Panc1 (cell line): ENCODE measurements at regions of chr1 and their contacts with region 1.

Region 1: DNA sequence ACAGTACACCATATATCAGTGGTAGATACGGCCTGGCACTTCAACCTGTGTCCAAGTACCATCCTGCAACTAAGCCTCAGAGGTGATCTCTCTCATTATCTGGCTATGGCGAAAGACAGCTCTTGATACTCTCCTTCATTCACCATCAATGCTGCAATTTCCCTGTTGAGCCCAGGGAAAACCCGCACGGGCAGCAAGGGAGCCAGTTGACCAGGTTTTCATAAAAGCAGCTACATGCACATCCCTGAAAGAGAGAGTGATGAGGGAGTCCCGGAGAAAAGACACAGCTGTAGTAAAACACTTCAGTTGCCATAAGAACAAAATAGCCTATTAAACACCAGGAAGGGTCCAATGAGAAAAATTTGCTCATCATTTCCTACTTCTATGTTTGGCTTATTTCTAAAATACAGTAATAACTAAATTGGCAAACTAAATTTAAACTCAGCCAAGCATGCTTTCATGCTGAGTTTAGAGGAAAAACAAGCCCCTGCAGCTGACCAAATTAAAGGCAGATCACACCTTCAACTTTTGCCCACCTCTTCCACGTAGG is 68.3 kb downstream of the CAPZB start:
- DNase-seq: no peak
- ATAC-seq: no peak
- H3K4me3 ChIP-seq: no peak overlapping the region
- H3K27ac ChIP-seq: no peak overlapping the region
- H3K4me1 ChIP-seq: peaks cover 43% of the 10 kb centered on the region
- H3K27me3 ChIP-seq: no peaks in the 10 kb centered on the region
- CTCF ChIP-seq: no peak

Region 2: DNA sequence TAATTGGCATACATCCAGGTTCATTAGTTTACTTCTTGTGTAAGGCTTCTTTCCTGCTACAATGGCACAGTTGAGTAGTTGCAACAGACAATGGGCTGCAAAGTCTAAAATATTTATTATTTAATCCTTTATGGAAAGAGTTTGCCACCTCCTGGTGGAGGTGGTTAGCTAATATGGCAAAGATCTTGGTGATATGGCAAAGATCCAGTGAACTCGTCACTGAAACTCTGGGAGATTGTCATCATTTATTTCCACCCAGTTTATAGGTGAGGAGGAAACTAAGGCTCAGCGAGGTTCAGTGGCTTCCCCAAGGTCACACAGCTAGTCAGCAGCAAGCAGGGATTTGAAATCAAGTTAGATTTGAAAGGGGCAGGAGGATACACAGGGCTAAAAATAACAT is 444.5 kb before region 1 on chr1:
- CTCF ChIA-PET with region 1: no interaction called
- POLR2A ChIA-PET with region 1: no interaction called
- in situ Hi-C with region 1: no loop called
- intact Hi-C with region 1: no loop called
- DNase-seq: no peak
- ATAC-seq: 0 out of 2 replicates have a peak, but pooled peaks have one; percentile 10
- H3K4me3 ChIP-seq: no peak overlapping the region
- H3K27ac ChIP-seq: no peak overlapping the region
- H3K4me1 ChIP-seq: peaks cover 13% of the 10 kb centered on the region; the same call in 1 of the 2 replicates
- H3K27me3 ChIP-seq: no peaks in the 10 kb centered on the region
- CTCF ChIP-seq: no peak; the same call in 1 of the 2 replicates

Region 3: GRCh38 chr1:19406680-19407079 is 10.3 kb before region 1 on chr1:
- CTCF ChIA-PET with region 1: no interaction called
- POLR2A ChIA-PET with region 1: interaction called, 10 read pairs
- in situ Hi-C with region 1: no loop called
- intact Hi-C with region 1: no loop called
- DNase-seq: no peak
- ATAC-seq: no peak
- H3K4me3 ChIP-seq: no peak overlapping the region
- H3K27ac ChIP-seq: no peak overlapping the region
- H3K4me1 ChIP-seq: peaks cover 14% of the 10 kb centered on the region
- H3K27me3 ChIP-seq: no peaks in the 10 kb centered on the region
- CTCF ChIP-seq: no peak

Region 4: GRCh38 chr1:19454265-19455146 is 37.5 kb after region 1 on chr1:
- CTCF ChIA-PET with region 1: no interaction called
- POLR2A ChIA-PET with region 1: no interaction called
- in situ Hi-C with region 1: no loop called
- intact Hi-C with region 1: no loop called
- DNase-seq: no peak
- ATAC-seq: no peak
- H3K4me3 ChIP-seq: no peak overlapping the region
- H3K27ac ChIP-seq: peak overlapping the region; percentile 99
- H3K4me1 ChIP-seq: peaks cover 98% of the 10 kb centered on the region
- H3K27me3 ChIP-seq: no peaks in the 10 kb centered on the region
- CTCF ChIP-seq: no peak

Region 5: DNA sequence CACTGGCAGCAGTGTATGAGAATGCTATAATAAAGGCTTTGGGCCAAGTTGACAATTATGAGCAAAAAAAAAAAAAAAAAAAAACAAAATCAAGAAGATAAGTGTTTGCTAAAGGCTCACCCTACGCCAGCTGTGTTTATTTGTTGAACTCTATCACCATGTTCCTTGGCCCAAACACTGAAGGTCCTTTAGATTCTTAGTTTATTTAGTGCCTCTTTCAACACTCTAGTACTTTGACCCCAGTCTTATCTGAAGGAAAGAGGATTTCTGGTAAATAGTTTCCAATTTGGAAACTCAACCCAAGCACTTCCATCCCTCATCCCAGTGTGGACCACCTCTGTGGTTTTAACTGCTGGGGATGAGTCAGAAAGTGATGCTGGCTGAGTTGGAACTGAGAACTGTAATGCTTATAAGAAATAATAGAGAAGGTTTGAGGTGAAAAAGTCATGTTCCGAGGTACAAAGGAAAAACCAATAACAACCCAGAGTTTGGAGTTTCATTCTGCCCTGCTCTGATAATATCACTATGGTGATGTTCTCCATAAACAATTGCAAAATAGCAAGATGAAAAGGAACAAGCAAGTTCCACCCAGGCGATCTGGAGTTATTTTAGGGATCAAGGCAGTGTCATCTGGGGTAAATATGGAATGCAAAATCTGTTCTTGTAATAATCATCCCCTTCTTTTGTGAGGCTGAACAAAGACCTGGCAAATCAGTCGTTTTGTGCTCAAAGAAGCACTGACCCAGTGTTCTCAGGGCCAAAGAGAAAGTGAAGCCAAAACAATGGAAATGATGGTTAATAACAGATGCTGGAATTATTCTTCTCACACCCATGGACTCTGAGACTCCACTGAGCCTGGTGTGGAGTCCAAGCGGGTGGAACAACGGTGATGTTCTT is 88.0 kb after region 1 on chr1:
- CTCF ChIA-PET with region 1: no interaction called
- POLR2A ChIA-PET with region 1: no interaction called
- in situ Hi-C with region 1: no loop called
- intact Hi-C with region 1: no loop called
- DNase-seq: no peak
- ATAC-seq: no peak
- H3K4me3 ChIP-seq: no peak overlapping the region
- H3K27ac ChIP-seq: 0 out of 2 replicates have a peak overlapping the region, but pooled peaks have one; percentile 10
- H3K4me1 ChIP-seq: no peaks in the 10 kb centered on the region
- H3K27me3 ChIP-seq: no peaks in the 10 kb centered on the region
- CTCF ChIP-seq: no peak